ENCODE measurements at regions of chr15 and their contacts with region 1.

Region 1: GRCh38 chr15:32747921-32748342 is 30.1 kb downstream of the GREM1 start:
- DNase-seq: no peak
- ATAC-seq: no peak
- H3K4me3 ChIP-seq: no peak overlapping the region
- H3K27ac ChIP-seq: no peak overlapping the region
- H3K4me1 ChIP-seq: no peaks in the 10 kb centered on the region
- H3K27me3 ChIP-seq: no peaks in the 10 kb centered on the region; a peak in 1 of 5 replicates
- CTCF ChIP-seq: no peak
- EP300 ChIP-seq: no peak
- POLR2A ChIP-seq: no peak
- RAD21 ChIP-seq: no peak

Region 2: GRCh38 chr15:32763295-32763694 is 15.4 kb after region 1 on chr15:
- CTCF ChIA-PET with region 1: no interaction called
- POLR2A ChIA-PET with region 1: no interaction called
- in situ Hi-C with region 1: no loop called
- intact Hi-C with region 1: loop called (anchors 1 kb)
- DNase-seq: no peak
- ATAC-seq: no peak
- H3K4me3 ChIP-seq: no peak overlapping the region
- H3K27ac ChIP-seq: no peak overlapping the region
- H3K4me1 ChIP-seq: peaks cover 22% of the 10 kb centered on the region
- H3K27me3 ChIP-seq: no peaks in the 10 kb centered on the region; a peak in 1 of 5 replicates
- CTCF ChIP-seq: no peak
- EP300 ChIP-seq: no peak
- POLR2A ChIP-seq: no peak
- RAD21 ChIP-seq: no peak

Region 3: GRCh38 chr15:32792436-32792835 is 44.5 kb after region 1 on chr15:
- CTCF ChIA-PET with region 1: no interaction called
- POLR2A ChIA-PET with region 1: no interaction called
- in situ Hi-C with region 1: no loop called
- intact Hi-C with region 1: loop called (anchors 1 kb)
- DNase-seq: no peak
- ATAC-seq: no peak
- H3K4me3 ChIP-seq: no peak overlapping the region
- H3K27ac ChIP-seq: no peak overlapping the region
- H3K4me1 ChIP-seq: peaks cover 34% of the 10 kb centered on the region
- H3K27me3 ChIP-seq: no peaks in the 10 kb centered on the region; a peak in 1 of 5 replicates
- CTCF ChIP-seq: no peak
- EP300 ChIP-seq: no peak
- POLR2A ChIP-seq: no peak
- RAD21 ChIP-seq: no peak

Region 4: GRCh38 chr15:32956006-32956405 is 208.1 kb after region 1 on chr15:
- CTCF ChIA-PET with region 1: no interaction called
- POLR2A ChIA-PET with region 1: no interaction called
- in situ Hi-C with region 1: no loop called
- intact Hi-C with region 1: no loop called
- DNase-seq: peak; percentile 25
- ATAC-seq: peak; percentile 47; the same call in 1 of the 3 replicates
- H3K4me3 ChIP-seq: no peak overlapping the region
- H3K27ac ChIP-seq: no peak overlapping the region
- H3K4me1 ChIP-seq: no peaks in the 10 kb centered on the region
- H3K27me3 ChIP-seq: no peaks in the 10 kb centered on the region
- CTCF ChIP-seq: peak; percentile 54
- EP300 ChIP-seq: no peak
- POLR2A ChIP-seq: no peak
- RAD21 ChIP-seq: no peak